ENCODE measurements at regions of chr12 and their contacts with region 1.

Region 1: DNA sequence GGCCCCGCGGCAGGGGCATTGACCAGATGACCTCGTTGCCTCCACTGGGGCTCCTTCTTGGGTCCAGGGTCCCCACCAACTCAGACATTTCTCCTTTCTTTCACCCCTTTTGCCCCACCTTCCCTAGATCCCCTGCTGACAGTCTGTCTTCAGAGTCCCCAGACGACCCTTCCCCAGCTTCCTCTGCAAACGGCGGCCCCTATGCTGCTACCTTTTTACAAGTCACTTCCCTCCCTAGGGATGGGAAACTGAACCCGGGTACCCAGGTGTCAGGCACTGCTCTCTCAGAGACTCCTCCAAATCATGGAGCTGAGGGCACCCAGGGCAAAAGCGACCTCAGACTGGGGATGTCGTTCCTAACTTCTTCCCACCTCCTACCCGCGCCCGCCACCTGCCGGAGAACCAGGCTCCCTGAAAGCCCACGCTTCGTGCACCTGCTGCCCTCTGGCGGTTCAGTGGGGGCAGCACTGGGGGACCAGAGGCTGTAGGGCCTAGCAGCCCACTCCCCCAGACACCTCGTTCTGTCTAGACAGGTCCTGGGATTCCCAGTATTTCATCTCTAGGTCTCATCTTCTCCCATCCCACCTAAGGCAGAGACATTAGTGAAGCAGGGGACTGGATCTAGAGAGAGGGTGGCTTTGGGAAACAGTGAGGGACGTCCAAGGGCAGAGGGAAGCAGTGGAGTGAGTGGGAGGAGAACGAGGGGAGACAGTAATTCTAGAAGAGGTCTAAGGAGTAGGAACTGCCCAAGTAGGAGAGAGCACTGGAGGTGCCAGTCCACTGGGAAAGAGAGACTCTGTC is 4.9 kb downstream of the ZNF385A start:
- DNase-seq: peak; percentile 85 to 95 (median 90)
- ATAC-seq: peak; percentile 93
- H3K4me3 ChIP-seq: peak overlapping the region; percentile 36; the same call in 1 of the 2 replicates
- H3K27ac ChIP-seq: peak overlapping the region; percentile 29; the same call in 2 of the 3 replicates
- H3K4me1 ChIP-seq: peaks cover 43 to 49% of the 10 kb centered on the region in 2 experiments
- H3K27me3 ChIP-seq: no peaks in the 10 kb centered on the region
- CTCF ChIP-seq: peak; percentile 100
- EP300 ChIP-seq: peak; percentile 59
- POLR2A ChIP-seq: no peak
- RAD21 ChIP-seq: peak; percentile 89 to 96

Region 2: DNA sequence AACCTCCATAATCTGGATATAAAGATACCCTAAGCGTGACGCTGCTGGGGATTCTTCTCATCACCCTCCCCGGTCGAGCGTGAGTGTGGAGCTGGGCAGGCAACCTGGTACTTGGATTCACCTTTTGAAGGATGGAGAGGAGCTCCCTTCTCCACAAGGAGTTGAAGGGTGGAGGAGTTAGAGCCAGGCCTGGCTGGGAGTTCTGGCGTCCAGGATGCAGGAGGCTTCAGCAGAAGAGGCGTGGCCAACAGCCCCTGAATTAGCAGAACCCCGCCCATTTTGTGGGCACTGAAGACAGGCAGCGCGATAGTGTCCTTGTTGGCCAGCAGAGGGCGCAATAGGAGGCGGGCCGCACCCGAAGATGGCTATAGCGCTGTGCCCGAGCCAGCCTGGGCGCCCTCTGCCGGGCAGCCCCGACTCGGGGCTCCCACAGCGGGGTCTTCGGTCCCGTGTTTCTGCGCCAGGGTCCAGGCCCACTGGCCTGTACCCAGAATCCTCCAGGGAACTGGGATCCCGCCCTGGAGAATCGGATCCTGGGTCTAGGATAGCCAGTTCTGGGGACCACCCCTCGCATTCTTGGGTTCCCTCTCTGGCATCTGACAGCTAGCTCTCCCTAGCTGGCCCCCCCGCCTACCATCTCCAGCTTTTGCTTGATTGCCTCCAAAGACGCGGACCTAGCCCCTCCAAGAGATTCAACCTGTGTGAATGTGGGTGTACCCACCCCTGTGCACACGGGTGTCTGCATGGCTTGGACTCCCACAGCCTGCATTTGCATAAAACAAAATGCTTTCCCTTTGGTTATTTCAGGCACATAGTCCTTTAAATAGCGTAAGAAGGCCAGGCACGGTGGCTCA is 164.8 kb before region 1 on chr12:
- CTCF ChIA-PET with region 1: interaction called, 36 read pairs
- POLR2A ChIA-PET with region 1: no interaction called
- in situ Hi-C with region 1: no loop called
- intact Hi-C with region 1: no loop called
- DNase-seq: peak; percentile 88 to 95 (median 94)
- ATAC-seq: peak; percentile 91
- H3K4me3 ChIP-seq: peak overlapping the region; percentile 44
- H3K27ac ChIP-seq: peak overlapping the region; percentile 50; the same call in 2 of the 3 replicates
- H3K4me1 ChIP-seq: peaks cover 25 to 48% of the 10 kb centered on the region in 2 experiments
- H3K27me3 ChIP-seq: no peaks in the 10 kb centered on the region
- CTCF ChIP-seq: peak; percentile 99 to 100 (median 99)
- EP300 ChIP-seq: peak; percentile 40; the same call in 1 of the 2 replicates
- POLR2A ChIP-seq: peak; percentile 47; the same call in 1 of the 2 replicates
- RAD21 ChIP-seq: peak; percentile 70 to 81

Region 3: DNA sequence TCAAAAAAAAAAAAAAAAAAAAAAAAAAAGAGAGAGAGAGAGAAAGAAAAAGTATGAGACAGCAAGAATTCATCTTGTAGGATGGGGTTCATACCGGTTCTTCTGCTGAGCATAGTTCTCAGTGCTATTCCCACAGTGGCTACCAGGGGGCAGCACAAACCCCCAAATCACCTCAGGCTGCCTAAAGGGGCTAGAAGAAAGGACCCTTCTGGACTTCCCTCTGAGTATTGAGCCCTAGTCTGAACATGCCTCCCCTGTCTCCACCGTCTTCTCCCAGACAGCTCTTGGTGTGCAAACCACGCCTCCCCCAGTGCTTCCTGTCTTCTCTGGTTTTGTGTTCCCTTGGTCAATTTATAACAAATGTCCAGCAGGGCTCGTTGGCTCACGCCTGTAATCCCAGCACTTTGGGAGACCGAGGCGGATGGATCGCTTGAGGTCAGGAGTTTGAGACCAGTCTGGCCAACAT is 159.5 kb before region 1 on chr12:
- CTCF ChIA-PET with region 1: interaction called, 36 read pairs
- POLR2A ChIA-PET with region 1: interaction called, 6 read pairs
- in situ Hi-C with region 1: no loop called
- intact Hi-C with region 1: no loop called
- DNase-seq: peak; percentile 75 to 88 (median 78)
- ATAC-seq: peak; percentile 81
- H3K4me3 ChIP-seq: no peak overlapping the region
- H3K27ac ChIP-seq: peak overlapping the region; percentile 66
- H3K4me1 ChIP-seq: peaks cover 29 to 34% of the 10 kb centered on the region in 2 experiments; a peak in 4 of 5 replicates
- H3K27me3 ChIP-seq: no peaks in the 10 kb centered on the region
- CTCF ChIP-seq: peak; percentile 91 to 94 (median 93)
- EP300 ChIP-seq: no peak
- POLR2A ChIP-seq: no peak
- RAD21 ChIP-seq: peak; percentile 95 to 98

Measured in K562 (cell line).